Posterior cingulate gyrus (tissue), 11 donors: ENCODE measurements at regions of chrX and their contacts with region 1.

Region 1: DNA sequence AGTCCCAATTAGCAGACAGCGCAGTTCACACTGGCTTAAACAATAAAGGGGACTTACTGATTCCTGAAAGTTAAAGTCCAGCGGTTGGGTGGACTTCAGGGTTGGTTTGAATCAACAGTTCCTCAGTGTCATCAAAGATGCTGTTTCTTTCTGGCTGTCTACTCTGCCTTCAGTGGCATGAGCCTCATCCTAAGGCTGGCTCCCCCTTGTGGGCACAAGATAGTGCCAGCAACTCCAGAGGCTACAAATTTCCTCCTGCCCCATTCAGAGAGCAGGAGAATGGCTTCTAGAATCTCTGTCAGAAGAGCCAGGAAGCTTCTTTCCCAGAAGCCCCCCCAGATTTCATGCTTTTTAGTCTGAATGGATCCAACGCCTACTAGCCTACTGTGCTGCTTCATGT is 82.4 kb upstream of the MTM1 start:
- DNase-seq: peak in 7 of 10 donors; percentile 52 to 92 (median 65)

Region 2: GRCh38 chrX:150372280-150372679 is 113.7 kb before region 1 on chrX:
- intact Hi-C with region 1: loop called (anchors 5 kb)
- DNase-seq: peak in 7 of 10 donors; percentile 15 to 84 (median 40)